Activated CD4-positive, alpha-beta memory T cell treated with anti-CD3 and anti-CD28 coated beads for 36 hours (primary cell): ENCODE measurements at regions of chr11 and their contacts with region 1.

Region 1: GRCh38 chr11:44927174-44927661 is 23.5 kb downstream of the TP53I11 start:
- DNase-seq: peak; percentile 67
- H3K4me3 Mint-ChIP-seq: no peak overlapping the region
- H3K27ac Mint-ChIP-seq: no peak overlapping the region
- H3K4me1 Mint-ChIP-seq: no peaks in the 10 kb centered on the region
- H3K27me3 Mint-ChIP-seq: no peaks in the 10 kb centered on the region

Region 2: GRCh38 chr11:44785856-44786606 is 141.2 kb before region 1 on chr11:
- CTCF ChIA-PET with region 1: interaction called, 11 read pairs
- POLR2A ChIA-PET with region 1: no interaction called
- intact Hi-C with region 1: no loop called
- DNase-seq: peak; percentile 20
- H3K4me3 Mint-ChIP-seq: no peak overlapping the region
- H3K27ac Mint-ChIP-seq: no peak overlapping the region
- H3K4me1 Mint-ChIP-seq: no peaks in the 10 kb centered on the region
- H3K27me3 Mint-ChIP-seq: no peaks in the 10 kb centered on the region

Region 3: DNA sequence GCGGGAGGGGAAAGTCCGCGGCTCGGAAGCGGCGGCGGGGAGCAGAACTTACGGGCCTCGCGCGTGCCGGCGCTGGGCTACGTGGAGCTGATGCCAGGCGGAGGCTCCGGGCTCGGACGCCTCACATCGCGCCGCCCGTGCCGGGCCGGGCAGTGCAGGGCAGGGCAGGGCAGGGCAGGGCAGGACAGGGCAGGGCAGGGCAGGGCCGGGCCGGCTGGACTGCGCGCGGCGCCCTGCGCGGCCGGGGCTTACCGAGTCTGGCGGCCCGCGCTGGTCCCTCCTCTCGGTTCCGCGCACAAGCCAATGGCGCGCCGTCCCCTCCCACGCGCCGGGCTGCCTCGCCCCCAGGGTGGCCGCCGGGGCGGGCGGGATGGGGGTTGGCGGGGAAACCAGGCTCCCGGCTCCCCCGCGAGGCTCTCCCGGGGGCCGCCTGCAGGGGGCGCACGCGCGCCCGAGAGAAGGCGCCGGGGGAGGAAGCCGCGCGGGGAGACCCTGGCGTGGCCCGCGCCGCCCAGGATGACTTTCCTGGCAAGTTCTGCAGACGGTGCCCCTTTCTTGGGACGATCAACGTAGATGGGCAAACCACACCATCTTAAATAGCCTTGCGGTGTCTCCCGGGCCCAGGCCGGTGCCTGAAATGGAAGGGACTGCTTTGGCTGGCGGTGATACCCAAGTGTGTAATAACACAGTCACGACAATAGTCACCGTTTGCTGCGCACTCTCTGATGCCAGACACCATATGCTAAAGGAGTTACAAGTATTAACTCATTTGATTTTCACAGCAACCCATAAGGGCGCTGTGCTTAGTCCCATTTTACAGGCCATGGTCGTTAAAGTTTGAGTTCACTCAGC is 23.6 kb after region 1 on chr11 and contains the start of gene TP53I11:
- CTCF ChIA-PET with region 1: interaction called, 35 read pairs
- POLR2A ChIA-PET with region 1: no interaction called
- intact Hi-C with region 1: no loop called
- DNase-seq: peak; percentile 82
- H3K4me3 Mint-ChIP-seq: peak within 1 kb of the TSS; percentile 76
- H3K27ac Mint-ChIP-seq: no peak within 1 kb of the TSS
- H3K4me1 Mint-ChIP-seq: peaks cover 6% of the 10 kb centered on the region
- H3K27me3 Mint-ChIP-seq: no peaks in the 10 kb centered on the region
- total RNA-seq, gene TP53I11: 15.7 to 17.6 TPM

Region 4: GRCh38 chr11:45332276-45332934 is 405.2 kb after region 1 on chr11:
- CTCF ChIA-PET with region 1: interaction called, 12 read pairs
- POLR2A ChIA-PET with region 1: no interaction called
- intact Hi-C with region 1: no loop called
- DNase-seq: peak; percentile 49
- H3K4me3 Mint-ChIP-seq: no peak overlapping the region
- H3K27ac Mint-ChIP-seq: no peak overlapping the region
- H3K4me1 Mint-ChIP-seq: no peaks in the 10 kb centered on the region
- H3K27me3 Mint-ChIP-seq: peaks cover 3% of the 10 kb centered on the region